Activated naive CD8-positive, alpha-beta T cell treated with anti-CD3 and anti-CD28 coated beads, Interleukin-2, amount 10 ng/mL, durations not matched to agents 7 days and 5 days (primary cell): ENCODE measurements at regions of chr1 and their contacts with region 1.

Region 1: DNA sequence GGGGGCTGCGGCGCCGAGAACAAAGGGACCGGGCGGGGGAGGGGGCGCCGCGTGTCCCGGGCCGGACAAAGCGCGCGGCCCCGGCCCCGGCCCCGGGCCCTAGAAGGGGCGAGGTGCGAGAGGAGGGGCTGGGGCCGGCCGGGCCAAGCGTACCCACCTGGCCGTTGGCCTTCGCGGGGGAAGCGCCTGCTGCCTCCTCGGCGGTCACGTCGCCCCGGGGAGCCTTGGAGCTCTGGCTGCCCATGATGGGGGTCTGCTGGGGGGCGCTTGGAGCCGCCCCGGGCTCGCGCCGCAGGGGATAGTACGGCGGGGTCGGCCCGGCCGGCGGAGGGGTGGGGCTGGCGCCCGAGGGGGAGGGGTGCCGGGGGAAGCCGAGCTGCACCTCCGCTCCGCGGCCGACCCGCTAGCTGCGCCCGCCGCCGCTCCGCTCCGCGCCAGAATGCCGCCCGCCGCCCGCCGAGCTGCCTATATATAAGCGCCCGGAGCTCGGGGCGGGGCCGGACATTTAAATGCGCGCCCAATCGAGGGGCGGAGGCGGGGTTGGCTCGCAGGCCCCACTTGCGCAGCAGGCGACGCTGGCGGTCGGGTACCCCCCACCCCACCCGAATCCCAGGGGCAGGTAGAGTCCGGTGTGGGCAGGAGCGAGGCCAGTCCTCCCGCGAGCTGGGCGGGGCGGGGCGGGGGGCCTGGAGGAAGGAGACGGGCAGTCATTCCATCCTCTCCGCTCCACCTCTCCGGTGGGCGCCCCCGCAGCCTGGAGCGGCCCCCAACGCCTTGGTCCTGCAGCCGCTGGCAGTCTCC is at the start of gene MARCKSL1:
- DNase-seq: peak; percentile 91
- ATAC-seq: peak; percentile 62
- H3K4me3 Mint-ChIP-seq: peak within 1 kb of the TSS; percentile 85
- H3K27ac Mint-ChIP-seq: no peak within 1 kb of the TSS
- H3K4me1 Mint-ChIP-seq: peaks cover 24% of the 10 kb centered on the region
- H3K27me3 Mint-ChIP-seq: peaks cover 7% of the 10 kb centered on the region
- total RNA-seq, gene MARCKSL1: 21.7 to 22.0 TPM

Region 2: DNA sequence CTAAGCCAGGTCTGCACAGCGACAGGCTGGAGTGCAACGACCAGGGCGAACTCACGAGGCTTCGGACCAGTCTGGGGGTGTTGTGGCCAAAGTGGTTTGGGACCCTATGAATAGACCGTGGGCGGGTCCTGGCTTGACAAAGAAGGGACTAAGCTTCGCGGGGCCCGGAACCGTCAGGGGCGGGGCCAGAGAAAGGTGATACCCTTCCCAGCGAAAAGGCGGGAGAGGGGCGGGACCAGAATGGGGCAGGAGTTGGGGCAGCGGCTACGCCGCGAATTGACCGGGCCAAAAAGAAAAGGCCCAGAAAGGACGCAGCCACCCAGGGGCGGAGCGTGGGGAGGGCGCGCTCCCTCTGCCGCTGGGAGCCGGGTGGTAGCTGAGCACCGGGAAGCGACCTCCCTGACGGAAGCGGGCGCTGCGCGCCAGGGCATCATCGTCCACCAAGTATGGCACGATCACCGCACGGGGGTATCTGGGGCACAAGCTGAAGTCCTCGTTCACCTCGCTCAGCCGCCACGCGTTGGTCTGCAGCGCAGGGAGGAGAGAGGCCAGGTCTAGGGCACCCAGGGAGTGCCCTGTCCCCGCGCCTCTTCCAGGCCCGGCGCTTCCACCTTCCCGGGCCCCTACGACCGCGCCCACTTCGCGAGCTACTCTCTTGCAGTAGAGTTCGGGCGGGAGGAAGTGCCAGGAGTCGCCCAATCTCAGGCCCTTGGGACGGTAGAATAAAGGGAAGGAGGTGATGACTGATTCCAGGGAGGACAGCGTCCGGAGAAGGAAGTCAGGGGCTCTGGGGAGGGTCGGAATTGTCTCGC is 95.6 kb before region 1 on chr1:
- POLR2A ChIA-PET with region 1: interaction called, 11 read pairs
- DNase-seq: peak; percentile 66
- ATAC-seq: peak; percentile 59
- H3K4me3 Mint-ChIP-seq: peak overlapping the region; percentile 84
- H3K27ac Mint-ChIP-seq: peak overlapping the region; percentile 79
- H3K4me1 Mint-ChIP-seq: peaks cover 14% of the 10 kb centered on the region
- H3K27me3 Mint-ChIP-seq: no peaks in the 10 kb centered on the region

Region 3: DNA sequence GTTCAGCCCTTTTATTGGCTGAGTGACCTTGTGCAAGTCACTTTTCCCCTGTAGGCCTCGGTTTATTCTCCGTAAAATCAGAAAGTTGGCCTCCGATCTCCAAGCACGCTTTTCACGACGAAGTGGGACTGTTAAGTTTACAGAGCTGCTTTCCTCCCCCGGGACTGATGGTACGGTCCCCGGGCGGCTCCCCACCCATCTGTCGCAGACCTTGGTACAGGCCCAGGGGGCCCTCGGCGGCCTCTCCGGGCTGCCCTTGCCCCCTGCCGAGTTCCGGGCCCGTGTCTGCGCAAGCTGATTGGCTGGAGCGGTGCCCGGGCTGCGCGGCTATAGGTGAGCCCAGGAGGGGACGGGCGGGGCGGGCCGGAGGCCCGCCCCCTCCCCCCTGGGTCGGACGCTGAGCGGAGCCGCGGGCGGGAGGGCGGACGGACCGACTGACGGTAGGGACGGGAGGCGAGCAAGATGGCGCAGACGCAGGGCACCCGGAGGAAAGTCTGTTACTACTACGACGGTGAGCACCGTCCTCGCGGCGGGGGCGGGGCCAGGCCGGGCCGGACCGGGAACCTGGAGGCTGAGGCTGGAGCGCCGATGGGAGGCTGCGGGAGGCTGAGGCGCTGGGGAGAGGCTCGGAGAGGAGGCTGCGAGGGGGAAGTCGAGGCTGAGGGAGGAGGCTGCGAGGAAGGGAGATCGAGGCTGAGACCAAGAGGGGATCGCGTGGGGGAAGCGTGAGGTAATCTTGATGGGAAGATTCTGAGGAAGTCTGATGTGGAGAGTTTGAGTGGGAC is 44.1 kb before region 1 on chr1 and contains the start of gene HDAC1:
- POLR2A ChIA-PET with region 1: interaction called, 24 read pairs
- DNase-seq: peak; percentile 96
- ATAC-seq: peak; percentile 99
- H3K4me3 Mint-ChIP-seq: peak within 1 kb of the TSS; percentile 100
- H3K27ac Mint-ChIP-seq: peak within 1 kb of the TSS; percentile 87
- H3K4me1 Mint-ChIP-seq: peaks cover 29% of the 10 kb centered on the region
- H3K27me3 Mint-ChIP-seq: no peaks in the 10 kb centered on the region
- total RNA-seq, gene HDAC1: 195 to 197 TPM

Region 4: GRCh38 chr1:32303997-32304622 is 31.9 kb before region 1 on chr1:
- POLR2A ChIA-PET with region 1: no interaction called
- DNase-seq: no peak
- ATAC-seq: no peak
- H3K4me3 Mint-ChIP-seq: no peak overlapping the region
- H3K27ac Mint-ChIP-seq: peak overlapping the region; percentile 64
- H3K4me1 Mint-ChIP-seq: peaks cover 23% of the 10 kb centered on the region
- H3K27me3 Mint-ChIP-seq: no peaks in the 10 kb centered on the region

Region 5: GRCh38 chr1:32351399-32352238 is 15.6 kb after region 1 on chr1:
- POLR2A ChIA-PET with region 1: interaction called, 33 read pairs
- DNase-seq: peak; percentile 91
- ATAC-seq: peak; percentile 90
- H3K4me3 Mint-ChIP-seq: peak overlapping the region; percentile 84
- H3K27ac Mint-ChIP-seq: peak overlapping the region; percentile 83
- H3K4me1 Mint-ChIP-seq: peaks cover 32% of the 10 kb centered on the region
- H3K27me3 Mint-ChIP-seq: peaks cover 4% of the 10 kb centered on the region

Region 6: GRCh38 chr1:32372149-32372756 is 36.3 kb after region 1 on chr1:
- POLR2A ChIA-PET with region 1: interaction called, 12 read pairs
- DNase-seq: peak; percentile 61
- ATAC-seq: peak; percentile 89
- H3K4me3 Mint-ChIP-seq: no peak overlapping the region
- H3K27ac Mint-ChIP-seq: no peak overlapping the region
- H3K4me1 Mint-ChIP-seq: peaks cover 14% of the 10 kb centered on the region
- H3K27me3 Mint-ChIP-seq: no peaks in the 10 kb centered on the region